ENCODE measurements at regions of chr6 and their contacts with region 1.

Region 1: DNA sequence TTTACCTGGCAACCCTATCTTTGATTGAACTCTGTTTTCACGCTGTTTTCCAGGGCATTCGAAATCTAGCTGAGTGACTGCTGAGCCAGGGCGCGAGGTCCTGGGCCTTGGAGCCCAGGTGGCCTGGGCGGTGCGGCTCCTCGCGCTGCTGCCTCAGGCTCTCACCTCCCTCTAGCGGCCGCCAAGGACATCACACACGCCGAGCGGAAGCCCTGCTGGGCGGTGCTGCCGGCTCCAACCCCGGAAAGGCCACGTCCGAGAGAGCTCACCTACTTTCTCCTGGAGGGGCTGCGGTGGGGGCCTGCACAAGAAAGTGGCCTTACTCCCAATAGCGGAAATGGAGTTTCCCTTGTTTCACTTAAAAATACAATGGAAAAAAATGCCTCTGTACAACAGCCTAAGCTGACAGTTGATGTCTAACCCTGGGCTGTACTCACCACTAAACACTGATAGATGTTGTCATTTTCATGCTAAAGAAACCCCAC is 77.7 kb downstream of the ELOVL4 start:
- DNase-seq: peak; percentile 37 to 70
- H3K4me3 ChIP-seq: peak overlapping the region; percentile 34; the same call in 1 of the 2 replicates
- H3K27ac ChIP-seq: no peak overlapping the region
- H3K4me1 ChIP-seq: no peaks in the 10 kb centered on the region
- H3K27me3 ChIP-seq: no peaks in the 10 kb centered on the region
- CTCF ChIP-seq: peak; percentile 86

Region 2: DNA sequence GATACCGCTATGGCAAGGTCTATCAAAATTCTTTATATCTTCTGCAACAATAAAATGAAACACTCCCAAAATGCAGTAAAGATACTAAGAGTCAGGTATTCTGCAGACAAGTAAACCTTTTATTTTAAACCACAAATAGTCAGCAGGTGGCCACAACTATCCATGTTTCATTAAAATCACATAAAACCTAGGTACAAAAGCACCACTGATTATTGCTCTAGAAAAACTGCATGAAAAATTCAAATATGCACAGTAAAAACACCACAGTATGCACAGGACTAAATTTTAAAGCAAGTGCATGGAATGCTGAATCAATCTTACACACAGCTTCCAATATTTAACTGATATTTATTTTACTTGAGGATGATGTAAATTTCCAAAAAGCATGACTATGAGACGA is 668.5 kb before region 1 on chr6:
- CTCF ChIA-PET with region 1: no interaction called
- POLR2A ChIA-PET with region 1: no interaction called
- intact Hi-C with region 1: loop called (anchors 5 kb)
- DNase-seq: no peak
- H3K4me3 ChIP-seq: no peak overlapping the region
- H3K27ac ChIP-seq: no peak overlapping the region
- H3K4me1 ChIP-seq: no peaks in the 10 kb centered on the region
- H3K27me3 ChIP-seq: no peaks in the 10 kb centered on the region
- CTCF ChIP-seq: no peak

Region 3: DNA sequence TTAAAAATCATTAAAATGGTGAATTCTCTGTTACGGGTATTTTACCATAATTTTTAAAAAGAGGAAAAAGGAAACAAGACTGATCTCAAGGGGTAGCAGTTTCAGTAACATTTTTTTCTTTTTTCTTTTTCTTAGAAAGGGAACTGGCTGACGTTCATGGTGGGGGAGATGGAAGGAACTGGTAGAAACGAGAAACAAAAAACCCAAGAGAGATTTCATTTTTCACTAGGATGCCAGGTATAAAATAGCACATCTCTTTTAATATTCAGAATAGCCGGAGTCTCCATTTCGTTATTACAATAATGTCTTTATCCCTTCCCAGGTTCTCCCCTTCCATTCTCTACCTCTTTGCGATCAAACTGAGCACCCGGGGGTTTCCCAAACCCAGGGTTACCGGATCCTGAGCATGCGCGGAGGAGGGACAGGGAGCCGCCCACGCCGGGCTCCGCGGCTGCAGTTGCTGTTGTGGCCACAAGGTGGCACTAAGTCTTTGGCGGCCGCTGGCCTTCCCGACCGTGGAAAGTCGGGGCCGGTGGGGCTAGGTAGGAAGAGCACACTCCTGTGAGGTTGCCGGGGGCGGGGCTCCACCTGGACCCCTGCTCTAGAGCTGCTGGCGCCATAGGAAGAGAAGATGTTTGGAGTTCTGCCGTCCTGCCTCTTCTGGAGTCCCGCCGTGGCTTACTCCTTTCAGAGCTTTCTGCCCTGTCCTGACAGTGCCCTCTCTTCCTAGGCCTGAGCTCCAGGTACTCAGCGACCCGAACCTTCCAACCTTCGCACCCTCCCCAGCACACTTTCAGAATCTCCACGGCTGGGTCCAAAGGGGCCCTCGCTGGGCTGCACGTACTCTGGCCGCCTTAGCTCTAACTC is 91.7 kb before region 1 on chr6:
- CTCF ChIA-PET with region 1: no interaction called
- POLR2A ChIA-PET with region 1: no interaction called
- intact Hi-C with region 1: loop called (anchors 1 kb)
- DNase-seq: peak; percentile 35 to 69
- H3K4me3 ChIP-seq: peak overlapping the region; percentile 56; the same call in 1 of the 2 replicates
- H3K27ac ChIP-seq: no peak overlapping the region
- H3K4me1 ChIP-seq: no peaks in the 10 kb centered on the region
- H3K27me3 ChIP-seq: no peaks in the 10 kb centered on the region
- CTCF ChIP-seq: peak; percentile 90

Region 4: DNA sequence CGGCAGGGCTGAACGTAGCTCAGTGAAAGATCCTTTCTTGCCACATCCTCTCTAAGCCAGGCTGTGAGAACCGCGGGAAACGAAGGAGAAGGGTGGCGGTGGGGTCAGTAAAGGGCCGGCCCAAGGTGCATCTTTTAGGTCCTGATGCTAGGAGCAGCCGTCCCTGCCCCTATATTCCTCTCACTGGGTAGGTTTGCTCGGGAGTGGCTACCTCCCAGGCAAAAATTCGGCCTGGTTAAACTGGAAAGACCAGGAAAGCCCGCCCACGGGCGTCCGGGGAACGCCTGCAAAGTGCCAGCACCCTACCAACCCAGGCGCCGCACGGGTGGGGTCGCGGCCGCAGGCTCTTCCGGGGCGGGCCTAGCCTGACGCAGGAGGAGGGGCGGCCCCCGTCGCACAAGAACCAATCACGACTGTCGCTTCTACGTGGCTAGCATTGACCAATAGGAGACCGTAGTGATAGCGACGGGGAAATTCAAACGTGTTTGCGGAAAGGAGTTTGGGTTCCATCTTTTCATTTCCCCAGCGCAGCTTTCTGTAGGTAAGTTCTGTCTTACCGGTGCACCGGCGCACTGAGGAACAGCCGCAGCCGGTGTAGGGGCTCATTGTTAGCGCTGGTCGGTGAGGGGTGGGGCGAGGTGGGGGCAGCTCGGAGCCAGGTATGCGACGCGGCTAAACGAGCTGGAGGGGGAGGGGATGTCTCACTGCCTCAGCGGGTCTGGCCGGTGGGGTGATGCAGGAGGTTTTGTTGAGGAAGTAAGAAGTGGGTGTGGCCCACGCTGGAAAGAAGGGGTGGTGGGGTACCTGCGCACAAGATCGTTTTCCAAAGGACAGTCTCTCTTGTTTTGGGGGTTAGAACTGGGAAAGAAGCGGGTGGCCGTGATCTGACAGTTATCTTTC is 134.8 kb after region 1 on chr6 and contains the start of gene TTK:
- CTCF ChIA-PET with region 1: no interaction called
- POLR2A ChIA-PET with region 1: no interaction called
- intact Hi-C with region 1: loop called (anchors 5 kb)
- DNase-seq: peak; percentile 85 to 95
- H3K4me3 ChIP-seq: peak within 1 kb of the TSS; percentile 82
- H3K27ac ChIP-seq: peak within 1 kb of the TSS; percentile 43; the same call in 1 of the 2 replicates
- H3K4me1 ChIP-seq: peaks cover 22% of the 10 kb centered on the region
- H3K27me3 ChIP-seq: no peaks in the 10 kb centered on the region
- CTCF ChIP-seq: no peak
- total RNA-seq, gene TTK: 28.7 and 40.3 TPM in 2 replicates

Measured in PC-9 (cell line).